ENCODE measurements at regions of chr19 and their contacts with region 1.

Region 1: GRCh38 chr19:56538254-56538760 is 441 bp upstream of the ZFP28 start:
- DNase-seq: peak; percentile 86
- H3K4me3 ChIP-seq: peak overlapping the region; percentile 64 to 77
- H3K27ac ChIP-seq: peak overlapping the region; percentile 88 to 91
- H3K4me1 ChIP-seq: no peaks in the 10 kb centered on the region
- H3K27me3 ChIP-seq: no peaks in the 10 kb centered on the region
- CTCF ChIP-seq: peak in 2 of 4 experiments; percentile 25 to 33
- POLR2A ChIP-seq: peak; percentile 37

Region 2: DNA sequence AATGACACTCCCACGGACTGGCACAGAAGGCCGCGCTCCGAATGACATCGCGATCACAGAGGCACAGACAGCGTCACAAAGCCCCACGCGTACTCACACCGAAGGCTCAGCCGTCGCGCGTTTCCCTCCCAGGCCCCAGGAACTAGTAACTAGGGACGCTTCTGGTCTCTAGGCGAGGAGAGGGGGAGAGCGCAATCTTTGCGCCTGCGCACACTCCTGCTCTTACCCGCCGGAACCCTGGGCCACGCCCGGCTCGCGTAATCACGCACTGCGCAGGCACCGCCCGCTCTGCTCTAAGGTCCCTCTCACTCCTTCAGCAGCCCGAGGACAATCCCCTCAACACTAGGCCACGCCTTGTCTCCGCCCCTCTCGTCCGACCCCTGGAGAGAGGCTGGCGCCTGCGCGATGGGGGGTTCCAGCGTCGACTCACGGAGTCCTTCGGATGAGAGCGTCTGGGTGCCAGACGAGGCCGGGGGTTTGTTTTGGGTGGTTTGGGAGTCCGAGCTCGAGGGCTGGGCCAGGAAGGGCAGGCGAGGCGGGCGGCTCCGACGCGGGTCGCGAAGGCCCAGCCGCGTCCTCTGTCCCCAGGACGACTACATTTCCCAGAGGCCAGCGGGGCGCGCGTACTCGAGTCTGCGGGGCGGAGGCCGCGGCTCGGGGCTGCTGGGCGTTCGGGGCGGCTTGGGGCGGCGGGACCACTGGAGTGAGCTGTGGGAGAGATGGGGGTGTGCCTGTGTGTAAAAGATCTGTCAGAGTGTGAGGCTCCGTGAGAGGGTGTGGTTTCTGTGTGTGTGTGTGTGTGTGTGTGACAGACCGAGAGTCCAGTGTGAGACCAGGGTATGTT is 30.6 kb before region 1 on chr19 and contains the start of gene ZNF471:
- intact Hi-C with region 1: loop called (anchors 1 kb)
- DNase-seq: peak; percentile 99
- H3K4me3 ChIP-seq: peak within 1 kb of the TSS; percentile 71
- H3K27ac ChIP-seq: peak within 1 kb of the TSS; percentile 96 to 98
- H3K4me1 ChIP-seq: peaks cover 3% of the 10 kb centered on the region
- H3K27me3 ChIP-seq: no peaks in the 10 kb centered on the region
- CTCF ChIP-seq: no peak
- POLR2A ChIP-seq: peak; percentile 37
- total RNA-seq, gene ZNF471: 4.9 to 8.8 TPM

Region 3: GRCh38 chr19:56567274-56568120 is 29.2 kb after region 1 on chr19 and contains the start of gene ZNF470:
- intact Hi-C with region 1: loop called (anchors 1 kb)
- DNase-seq: peak; percentile 95
- H3K4me3 ChIP-seq: peak within 1 kb of the TSS; percentile 70 to 87
- H3K27ac ChIP-seq: peak within 1 kb of the TSS; percentile 69 to 78
- H3K4me1 ChIP-seq: no peaks in the 10 kb centered on the region
- H3K27me3 ChIP-seq: no peaks in the 10 kb centered on the region
- CTCF ChIP-seq: no peak
- POLR2A ChIP-seq: peak; percentile 9
- total RNA-seq, gene ZNF470: 5.7 to 6.3 TPM

Measured in prostate gland (tissue), 2 donors.